ENCODE measurements at regions of chr2 and their contacts with region 1.

Region 1: DNA sequence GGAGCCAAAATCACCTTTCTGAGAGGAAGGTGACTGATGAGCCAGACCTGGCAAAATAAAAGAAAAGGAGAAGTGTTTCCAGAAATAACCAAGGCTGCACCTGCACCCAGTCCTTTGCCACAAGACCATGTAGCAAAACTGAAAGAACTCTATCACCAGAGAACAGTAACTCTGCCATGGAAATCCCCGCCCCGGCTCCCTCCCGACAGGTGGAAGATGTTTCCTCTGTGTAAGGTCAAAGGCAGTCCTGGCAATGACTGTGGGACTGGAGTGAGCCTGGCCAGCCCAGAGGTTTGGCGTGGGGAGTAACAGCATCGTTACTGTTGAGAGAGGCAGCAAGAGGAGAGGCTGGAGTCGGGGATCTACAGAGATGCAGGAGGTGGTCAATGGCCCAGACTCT is 42.3 kb downstream of the SPRED2 start:
- DNase-seq: peak; percentile 89
- H3K4me3 ChIP-seq: peak overlapping the region; percentile 60
- H3K27ac ChIP-seq: peak overlapping the region; percentile 96
- H3K4me1 ChIP-seq: peaks cover 99% of the 10 kb centered on the region
- CTCF ChIP-seq: no peak

Region 2: DNA sequence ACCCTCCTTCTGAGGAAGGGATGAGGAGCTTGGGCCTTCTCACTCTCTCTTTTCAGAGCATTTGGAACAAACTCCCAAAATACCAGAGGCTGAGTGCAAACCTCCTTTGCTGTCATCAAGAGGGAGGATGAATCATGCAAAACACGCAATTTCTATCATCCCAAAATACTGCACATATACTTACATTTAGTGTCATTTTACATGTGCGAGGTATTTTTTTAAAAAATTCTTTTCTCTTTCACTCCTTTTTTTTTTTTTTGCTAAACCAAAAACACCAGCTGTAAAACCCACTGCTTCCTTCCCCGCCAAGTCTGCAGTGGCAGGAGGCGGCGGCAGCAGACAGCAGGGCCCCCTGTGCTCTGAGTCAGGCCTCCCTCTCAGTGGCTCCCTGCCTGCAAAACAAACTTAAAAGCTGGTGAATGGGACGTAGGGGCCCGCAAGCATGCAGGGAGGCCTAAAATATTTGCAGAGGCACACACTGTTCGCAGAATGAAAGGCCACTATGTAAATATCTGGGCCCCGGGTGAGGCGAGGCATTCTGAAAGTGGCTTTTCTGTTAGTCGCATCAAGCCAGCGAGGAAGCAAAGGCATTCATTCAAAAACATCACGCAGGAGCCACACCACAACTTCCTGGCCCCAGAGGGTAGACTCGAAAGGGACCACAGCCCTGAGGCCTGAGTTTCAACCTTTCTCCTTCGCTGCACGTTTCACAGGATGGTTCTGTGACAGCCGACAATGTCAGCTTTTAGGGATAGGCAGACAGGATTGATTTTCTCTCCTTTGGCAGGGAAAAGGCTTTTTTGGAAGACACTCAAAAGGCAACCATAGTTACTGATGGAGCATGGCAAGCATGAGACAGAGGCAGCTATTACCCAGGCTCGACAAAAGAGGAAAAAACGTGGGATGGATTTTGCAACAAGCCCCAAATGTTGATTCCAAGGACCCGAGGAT is 89.1 kb before region 1 on chr2:
- CTCF ChIA-PET with region 1: no interaction called
- POLR2A ChIA-PET with region 1: interaction called, 3 read pairs
- intact Hi-C with region 1: loop called (anchors 2 kb)
- DNase-seq: peak; percentile 89
- H3K4me3 ChIP-seq: peak overlapping the region; percentile 44
- H3K27ac ChIP-seq: peak overlapping the region; percentile 86
- H3K4me1 ChIP-seq: peaks cover 50% of the 10 kb centered on the region
- CTCF ChIP-seq: 0 out of 2 replicates have a peak, but pooled peaks have one; percentile 31

Region 3: DNA sequence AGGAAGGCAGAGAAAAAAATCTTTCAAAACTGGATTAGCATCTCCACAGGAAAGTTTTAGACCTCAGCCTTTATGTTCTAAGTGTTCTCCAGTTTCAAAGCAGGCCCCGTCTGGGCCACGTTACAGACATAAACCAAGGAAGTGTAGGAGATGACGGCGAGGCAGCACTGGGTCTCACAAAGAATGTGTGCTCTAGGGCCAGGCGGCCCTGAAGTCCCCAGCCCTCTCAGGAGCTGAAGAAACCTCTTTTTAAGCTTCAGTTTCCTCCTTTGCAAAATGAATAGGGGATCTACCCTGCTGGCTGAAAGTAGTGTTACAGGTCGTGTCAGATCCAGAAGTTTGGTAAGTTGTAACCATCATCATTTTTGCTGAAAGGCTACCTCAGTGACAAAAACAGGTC is 39.5 kb before region 1 on chr2:
- CTCF ChIA-PET with region 1: no interaction called
- POLR2A ChIA-PET with region 1: interaction called, 8 read pairs
- intact Hi-C with region 1: loop called (anchors 5 kb)
- DNase-seq: peak; percentile 83
- H3K4me3 ChIP-seq: peak overlapping the region; percentile 46
- H3K27ac ChIP-seq: peak overlapping the region; percentile 81
- H3K4me1 ChIP-seq: peaks cover 70% of the 10 kb centered on the region
- CTCF ChIP-seq: peak; percentile 74

Measured in OCI-LY7 (cell line).